Activated CD8-positive, alpha-beta T cell treated with anti-CD3 and anti-CD28 coated beads for 36 hours (primary cell): ENCODE measurements at regions of chr5 and their contacts with region 1.

Region 1: DNA sequence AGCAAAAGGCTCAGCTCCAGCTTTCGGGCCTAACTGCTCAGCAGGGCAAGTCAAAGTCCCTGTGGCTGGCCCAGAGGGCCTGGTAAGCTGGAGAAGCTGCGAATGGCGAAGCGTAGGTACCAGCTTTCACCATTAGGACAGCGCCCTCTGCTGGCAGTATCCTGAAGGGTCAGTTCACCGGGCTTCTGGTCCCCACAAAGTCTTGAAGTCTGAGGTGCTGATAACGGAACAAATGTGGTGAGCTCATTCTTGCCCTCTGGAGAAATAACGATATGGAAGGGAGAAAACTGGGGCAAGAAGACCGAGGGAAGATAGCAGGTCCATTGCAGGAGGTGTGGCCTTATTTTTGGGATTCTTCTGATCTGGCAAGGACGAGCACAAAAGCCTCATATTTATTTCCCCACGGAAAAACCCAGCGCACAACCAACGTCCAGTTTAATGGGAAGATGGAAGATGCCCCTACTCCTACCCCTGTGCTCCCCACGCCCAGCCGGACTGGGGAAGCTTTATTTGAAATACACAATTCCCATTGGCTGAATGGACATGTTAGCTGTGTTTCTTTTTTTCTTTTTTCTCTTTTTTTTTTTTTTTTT is 7.2 kb downstream of the SOWAHA start:
- DNase-seq: peak; percentile 97
- ATAC-seq: peak; percentile 83
- H3K4me3 Mint-ChIP-seq: no peak overlapping the region
- H3K27ac Mint-ChIP-seq: no peak overlapping the region
- H3K4me1 Mint-ChIP-seq: peaks cover 10% of the 10 kb centered on the region
- H3K27me3 Mint-ChIP-seq: peaks cover 38% of the 10 kb centered on the region
- CTCF ChIP-seq: peak; percentile 89

Region 2: DNA sequence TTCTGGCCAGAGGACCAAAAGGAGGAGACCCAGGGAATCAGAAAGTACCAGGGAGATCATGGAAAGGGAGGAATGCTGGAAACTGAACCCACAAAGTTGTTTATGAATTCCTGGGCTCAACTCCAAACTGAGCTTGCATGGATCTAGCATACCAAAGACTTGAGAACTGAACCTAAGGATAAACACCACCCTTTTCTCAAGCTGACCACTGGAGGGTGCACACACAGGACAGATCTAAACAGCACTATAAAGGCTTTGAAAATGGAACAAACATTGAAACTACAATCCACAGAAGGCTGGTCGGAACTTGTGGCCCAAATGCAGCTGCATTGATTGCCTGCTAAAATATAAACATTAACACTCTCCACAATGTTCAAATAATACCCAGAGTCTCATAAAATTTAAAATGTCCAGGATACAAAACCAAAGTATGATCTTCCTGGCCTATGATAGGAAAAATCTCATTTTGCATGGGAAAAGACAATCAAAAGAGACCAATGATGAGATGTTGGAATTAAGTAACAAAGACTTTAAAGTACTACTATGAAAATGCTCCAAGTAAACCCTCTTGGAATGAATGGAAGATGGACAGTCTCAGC is 314.1 kb before region 1 on chr5:
- CTCF ChIA-PET with region 1: interaction called, 39 read pairs
- POLR2A ChIA-PET with region 1: no interaction called
- intact Hi-C with region 1: no loop called
- DNase-seq: peak; percentile 44
- ATAC-seq: peak; percentile 57
- H3K4me3 Mint-ChIP-seq: no peak overlapping the region
- H3K27ac Mint-ChIP-seq: no peak overlapping the region
- H3K4me1 Mint-ChIP-seq: peaks cover 12% of the 10 kb centered on the region
- H3K27me3 Mint-ChIP-seq: peaks cover 15% of the 10 kb centered on the region
- CTCF ChIP-seq: peak; percentile 45

Region 3: GRCh38 chr5:132662925-132663770 is 157.1 kb before region 1 on chr5:
- CTCF ChIA-PET with region 1: interaction called, 10 read pairs
- POLR2A ChIA-PET with region 1: no interaction called
- intact Hi-C with region 1: no loop called
- DNase-seq: peak; percentile 75
- ATAC-seq: peak; percentile 76
- H3K4me3 Mint-ChIP-seq: peak overlapping the region; percentile 11
- H3K27ac Mint-ChIP-seq: peak overlapping the region; percentile 83
- H3K4me1 Mint-ChIP-seq: peaks cover 52% of the 10 kb centered on the region
- H3K27me3 Mint-ChIP-seq: peaks cover 3% of the 10 kb centered on the region
- CTCF ChIP-seq: no peak

Region 4: GRCh38 chr5:132753135-132753987 is 66.9 kb before region 1 on chr5:
- CTCF ChIA-PET with region 1: interaction called, 39 read pairs
- POLR2A ChIA-PET with region 1: no interaction called
- intact Hi-C with region 1: loop called (anchors 5 kb)
- DNase-seq: peak; percentile 47
- ATAC-seq: peak; percentile 51
- H3K4me3 Mint-ChIP-seq: no peak overlapping the region
- H3K27ac Mint-ChIP-seq: peak overlapping the region; percentile 7
- H3K4me1 Mint-ChIP-seq: peaks cover 41% of the 10 kb centered on the region
- H3K27me3 Mint-ChIP-seq: no peaks in the 10 kb centered on the region
- CTCF ChIP-seq: no peak

Region 5: GRCh38 chr5:132807163-132807838 is 13.0 kb before region 1 on chr5:
- CTCF ChIA-PET with region 1: interaction called, 51 read pairs
- POLR2A ChIA-PET with region 1: interaction called, 3 read pairs
- intact Hi-C with region 1: no loop called
- DNase-seq: peak; percentile 12
- ATAC-seq: peak; percentile 24
- H3K4me3 Mint-ChIP-seq: no peak overlapping the region
- H3K27ac Mint-ChIP-seq: no peak overlapping the region
- H3K4me1 Mint-ChIP-seq: no peaks in the 10 kb centered on the region
- H3K27me3 Mint-ChIP-seq: peaks cover 69% of the 10 kb centered on the region
- CTCF ChIP-seq: no peak